ENCODE measurements at regions of chr1 and their contacts with region 1.

Region 1: DNA sequence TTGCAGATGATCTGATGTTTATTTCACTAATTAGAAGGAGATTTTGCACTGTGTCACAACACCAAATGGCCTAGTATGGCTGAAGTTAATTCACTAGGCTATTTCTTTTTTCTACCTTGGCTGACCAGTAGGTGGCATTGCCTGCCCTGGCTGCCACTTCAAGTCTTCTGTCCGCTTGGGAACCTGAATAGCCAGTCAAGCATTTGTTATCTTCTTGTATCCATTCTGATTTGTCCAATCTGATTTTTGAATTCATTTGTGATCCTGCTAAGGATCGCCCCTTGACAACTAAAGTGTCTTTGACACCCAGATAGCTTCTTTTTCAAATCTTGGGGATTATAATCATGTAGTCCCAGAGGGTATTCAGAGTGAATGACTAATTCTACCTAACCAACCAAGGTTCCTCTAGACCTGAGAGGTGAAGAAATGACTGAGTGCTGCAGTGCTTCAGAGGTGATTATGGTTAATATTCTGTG is 99.4 kb downstream of the GIPC2 start:
- DNase-seq: peak; percentile 33
- H3K4me3 ChIP-seq: no peak overlapping the region
- CTCF ChIP-seq: peak; percentile 73

Region 2: DNA sequence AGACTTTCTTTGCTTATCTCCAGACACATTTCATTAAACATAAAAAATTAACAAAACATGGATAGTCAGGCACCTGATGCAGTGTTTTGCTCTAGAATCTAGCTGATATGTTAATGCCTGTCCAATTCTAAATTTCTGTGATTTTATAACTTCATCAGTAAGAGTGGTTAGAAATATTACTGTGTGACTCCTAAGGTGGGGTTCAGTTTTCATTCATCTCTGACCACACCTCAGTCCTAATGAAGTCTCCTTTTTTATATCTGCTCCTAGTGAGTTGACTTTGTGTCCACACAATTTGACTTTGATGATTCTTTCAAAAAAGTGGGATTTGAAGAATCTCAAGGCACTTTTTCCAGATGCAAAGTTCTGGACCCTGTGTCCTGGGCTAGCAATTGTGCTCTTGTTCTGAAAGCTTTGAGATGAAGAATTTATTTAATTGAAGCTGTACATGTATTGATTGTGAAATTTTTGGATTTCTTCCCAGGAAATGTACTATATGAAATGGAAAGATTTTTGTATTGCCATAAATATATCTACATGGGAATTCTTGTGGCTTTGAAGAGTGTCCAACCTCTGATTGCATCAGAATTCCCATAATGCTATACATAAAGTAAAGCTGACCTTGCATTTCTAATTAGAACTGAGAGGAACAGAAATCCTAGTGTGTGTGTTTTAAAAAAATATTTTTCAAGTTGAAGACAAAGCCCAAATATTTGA is 11.8 kb after region 1 on chr1:
- CTCF ChIA-PET with region 1: interaction called, 31 read pairs
- POLR2A ChIA-PET with region 1: no interaction called
- DNase-seq: peak; percentile 80
- H3K4me3 ChIP-seq: no peak overlapping the region
- CTCF ChIP-seq: no peak

Region 3: GRCh38 chr1:78491451-78492071 is 346.4 kb after region 1 on chr1:
- CTCF ChIA-PET with region 1: interaction called, 15 read pairs
- POLR2A ChIA-PET with region 1: no interaction called
- DNase-seq: no peak
- H3K4me3 ChIP-seq: peak overlapping the region; percentile 78
- CTCF ChIP-seq: no peak

Region 4: DNA sequence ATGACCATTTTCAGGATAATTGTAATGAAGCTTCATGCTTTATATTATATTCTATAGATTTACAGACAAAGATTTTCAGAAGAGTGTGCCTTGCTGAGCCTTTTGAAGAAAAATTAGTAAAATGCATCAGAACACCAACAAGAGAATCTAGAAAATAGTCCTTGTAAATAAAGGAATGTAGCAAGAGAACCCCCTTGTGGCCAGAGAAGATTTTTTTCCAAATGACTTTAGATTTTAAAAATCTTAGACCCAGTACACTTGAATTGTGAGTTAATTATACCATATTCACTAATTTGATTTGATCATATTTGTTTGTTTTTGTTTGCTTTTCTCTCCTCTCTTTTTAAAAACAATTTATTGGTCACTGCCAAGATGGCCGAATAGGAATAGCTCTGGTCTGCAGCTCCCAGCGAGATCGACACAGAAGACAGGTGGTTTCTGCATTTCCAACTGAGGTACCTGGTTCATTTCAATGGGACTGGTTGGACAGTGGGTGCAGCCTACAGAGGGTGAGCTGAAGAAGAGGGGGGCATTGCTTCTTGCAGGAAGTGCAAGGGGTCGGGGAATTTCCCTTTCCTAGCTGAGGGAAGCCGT is 462.3 kb after region 1 on chr1:
- CTCF ChIA-PET with region 1: interaction called, 181 read pairs
- POLR2A ChIA-PET with region 1: no interaction called
- DNase-seq: no peak
- H3K4me3 ChIP-seq: no peak overlapping the region
- CTCF ChIP-seq: peak; percentile 23

Region 5: GRCh38 chr1:78676347-78676982 is 531.3 kb after region 1 on chr1:
- CTCF ChIA-PET with region 1: interaction called, 12 read pairs
- POLR2A ChIA-PET with region 1: no interaction called
- DNase-seq: peak; percentile 12
- H3K4me3 ChIP-seq: no peak overlapping the region
- CTCF ChIP-seq: peak; percentile 37

Measured in AG04449 (cell line).